ENCODE measurements at regions of chr1 and their contacts with region 1.

Region 1: GRCh38 chr1:45303582-45304310 is 22.9 kb upstream of the HPDL start:
- DNase-seq: peak; percentile 94 to 97 (median 95)
- H3K4me3 ChIP-seq: peak overlapping the region; percentile 42 to 86
- H3K4me3 Mint-ChIP-seq: peak overlapping the region; percentile 87 to 94 (median 92)
- H3K27ac ChIP-seq: peak overlapping the region; percentile 85
- H3K27ac Mint-ChIP-seq: peak overlapping the region; percentile 93 to 98 (median 96)
- H3K4me1 ChIP-seq: peaks cover 11% of the 10 kb centered on the region
- H3K4me1 Mint-ChIP-seq: peaks cover 11 to 24% (median 18%) of the 10 kb centered on the region in 4 donors
- H3K27me3 ChIP-seq: no peaks in the 10 kb centered on the region
- H3K27me3 Mint-ChIP-seq: no peaks in the 10 kb centered on the region

Region 2: DNA sequence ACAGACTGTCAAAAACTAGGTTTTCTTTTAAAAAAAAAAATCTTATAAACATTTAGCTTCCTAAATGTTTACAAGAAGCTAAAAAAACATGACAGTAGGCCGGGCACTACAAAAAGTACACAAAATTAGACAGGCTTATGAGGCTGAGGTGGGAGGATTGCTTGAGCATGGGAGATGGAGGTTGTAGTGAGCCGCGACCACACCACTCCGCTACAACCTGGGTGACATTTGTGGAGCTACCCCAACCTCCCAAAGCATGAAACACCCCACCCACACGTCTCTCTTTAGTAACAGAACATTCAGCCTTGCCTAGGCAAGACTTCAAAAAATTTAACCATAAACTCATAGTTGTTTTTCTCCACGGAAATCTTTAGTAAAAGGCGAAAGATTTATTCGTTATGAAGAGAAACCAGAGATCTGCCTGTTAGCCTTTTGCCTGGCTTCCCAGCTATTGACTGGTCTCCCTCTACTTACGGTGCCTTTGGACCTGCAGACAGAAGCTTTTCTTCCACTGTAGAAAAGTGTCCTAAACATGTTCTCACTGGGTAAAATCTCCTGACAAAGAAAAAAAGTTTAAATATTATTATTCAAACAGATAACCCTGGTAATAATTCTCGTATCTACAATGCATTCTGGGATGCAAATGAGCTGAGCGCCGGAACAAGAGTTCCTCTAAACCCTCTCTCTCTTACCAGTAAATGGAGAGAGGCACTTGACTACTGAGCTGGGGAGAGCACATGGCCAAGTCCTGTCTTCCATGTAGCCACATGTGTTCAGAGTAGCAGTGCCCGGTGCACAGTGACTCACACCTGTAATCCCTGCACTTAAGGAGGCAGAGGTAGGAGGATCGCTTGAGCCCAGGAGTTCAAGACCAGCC is 582.0 kb before region 1 on chr1:
- CTCF ChIA-PET with region 1: interaction called, 5 read pairs
- POLR2A ChIA-PET with region 1: interaction called, 19 read pairs
- intact Hi-C with region 1: loop called (anchors 5 kb)
- DNase-seq: peak; percentile 77 to 85 (median 79)
- H3K4me3 ChIP-seq: no peak overlapping the region
- H3K4me3 Mint-ChIP-seq: peak overlapping the region; percentile 57 to 87 (median 80)
- H3K27ac ChIP-seq: peak overlapping the region; percentile 51
- H3K27ac Mint-ChIP-seq: peak overlapping the region; percentile 89 to 97 (median 94)
- H3K4me1 ChIP-seq: peaks cover 58% of the 10 kb centered on the region
- H3K4me1 Mint-ChIP-seq: peaks cover 50 to 74% (median 62%) of the 10 kb centered on the region in 4 donors
- H3K27me3 ChIP-seq: no peaks in the 10 kb centered on the region
- H3K27me3 Mint-ChIP-seq: no peaks in the 10 kb centered on the region

Region 3: DNA sequence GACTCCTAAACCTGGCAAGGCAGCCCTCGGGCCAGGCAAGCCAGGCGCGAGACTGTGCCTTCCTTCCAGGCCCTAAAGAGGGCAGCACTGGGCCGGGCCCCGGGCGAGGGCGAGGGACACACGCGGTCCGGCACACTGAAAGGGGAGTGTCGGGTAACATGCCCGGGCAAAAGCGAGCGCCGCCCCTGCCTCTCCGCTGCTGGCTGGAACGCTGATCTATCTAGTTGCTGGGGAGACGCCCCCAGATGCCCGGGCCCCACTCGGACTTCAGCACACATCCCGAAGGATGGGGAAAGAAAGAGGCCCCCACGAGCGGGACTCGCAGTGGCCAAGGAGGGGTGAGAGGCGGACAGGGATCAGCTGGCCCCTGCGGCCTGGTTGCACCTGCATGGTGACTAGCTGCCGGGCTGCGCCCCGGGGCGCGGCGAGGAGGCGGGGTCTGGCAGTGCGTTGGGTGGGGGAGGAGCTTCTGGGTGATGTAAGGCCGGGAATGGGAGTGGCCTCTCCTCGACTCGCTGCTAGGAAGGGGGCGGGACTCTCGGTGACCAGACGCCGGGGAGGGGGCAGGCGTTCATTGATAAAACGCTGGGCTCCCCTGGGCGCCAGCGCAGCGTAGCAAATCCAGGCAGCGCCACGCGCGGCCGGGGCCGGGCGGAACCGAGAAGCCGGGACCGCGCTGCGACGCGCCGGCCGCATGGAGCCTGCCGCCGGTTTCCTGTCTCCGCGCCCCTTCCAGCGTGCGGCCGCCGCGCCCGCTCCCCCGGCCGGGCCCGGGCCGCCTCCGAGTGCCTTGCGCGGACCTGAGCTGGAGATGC is 503.8 kb before region 1 on chr1 and contains the start of gene PLK3:
- CTCF ChIA-PET with region 1: interaction called, 5 read pairs
- POLR2A ChIA-PET with region 1: interaction called, 23 read pairs
- intact Hi-C with region 1: no loop called
- DNase-seq: peak; percentile 99 to 100 (median 99)
- H3K4me3 ChIP-seq: peak within 1 kb of the TSS; percentile 77 to 83
- H3K4me3 Mint-ChIP-seq: peak within 1 kb of the TSS; percentile 89 to 99 (median 96)
- H3K27ac ChIP-seq: peak within 1 kb of the TSS; percentile 96
- H3K27ac Mint-ChIP-seq: peak within 1 kb of the TSS; percentile 82 to 100 (median 99)
- H3K4me1 ChIP-seq: peaks cover 37% of the 10 kb centered on the region
- H3K4me1 Mint-ChIP-seq: peaks cover 23 to 48% (median 31%) of the 10 kb centered on the region in 4 donors
- H3K27me3 ChIP-seq: no peaks in the 10 kb centered on the region
- H3K27me3 Mint-ChIP-seq: no peaks in the 10 kb centered on the region
- total RNA-seq, gene PLK3: 151 to 153 TPM

Region 4: GRCh38 chr1:44985747-44986359 is 317.9 kb before region 1 on chr1:
- CTCF ChIA-PET with region 1: interaction called, 5 read pairs
- POLR2A ChIA-PET with region 1: interaction called, 10 read pairs
- intact Hi-C with region 1: loop called (anchors 1 kb)
- DNase-seq: no peak
- H3K4me3 ChIP-seq: peak overlapping the region; percentile 67 to 70
- H3K4me3 Mint-ChIP-seq: peak overlapping the region; percentile 98 to 100 (median 99)
- H3K27ac ChIP-seq: peak overlapping the region; percentile 59
- H3K27ac Mint-ChIP-seq: peak overlapping the region; percentile 34 to 99 (median 96)
- H3K4me1 ChIP-seq: peaks cover 11% of the 10 kb centered on the region
- H3K4me1 Mint-ChIP-seq: peaks cover 15 to 26% (median 21%) of the 10 kb centered on the region in 4 donors
- H3K27me3 ChIP-seq: no peaks in the 10 kb centered on the region
- H3K27me3 Mint-ChIP-seq: no peaks in the 10 kb centered on the region

Region 5: GRCh38 chr1:45339789-45340570 is 36.2 kb after region 1 on chr1 and contains the starts of genes MUTYH and TOE1:
- CTCF ChIA-PET with region 1: interaction called, 36 read pairs
- POLR2A ChIA-PET with region 1: interaction called, 130 read pairs
- intact Hi-C with region 1: loop called (anchors 1 kb)
- DNase-seq: peak; percentile 89 to 92 (median 90)
- H3K4me3 ChIP-seq: peak within 1 kb of the TSS; percentile 84 to 91
- H3K4me3 Mint-ChIP-seq: peak within 1 kb of the TSS; percentile 98 to 100 (median 100)
- H3K27ac ChIP-seq: peak within 1 kb of the TSS; percentile 93
- H3K27ac Mint-ChIP-seq: peak within 1 kb of the TSS; percentile 96 to 100 (median 99)
- H3K4me1 ChIP-seq: peaks cover 46% of the 10 kb centered on the region
- H3K4me1 Mint-ChIP-seq: peaks cover 31 to 75% (median 51%) of the 10 kb centered on the region in 4 donors
- H3K27me3 ChIP-seq: no peaks in the 10 kb centered on the region
- H3K27me3 Mint-ChIP-seq: no peaks in the 10 kb centered on the region
- total RNA-seq, gene MUTYH: 70.0 to 72.1 TPM
- total RNA-seq, gene TOE1: 18.2 to 18.9 TPM

Region 6: GRCh38 chr1:45370575-45370974 is 66.8 kb after region 1 on chr1:
- CTCF ChIA-PET with region 1: no interaction called
- POLR2A ChIA-PET with region 1: no interaction called
- intact Hi-C with region 1: no loop called
- DNase-seq: no peak
- H3K4me3 ChIP-seq: no peak overlapping the region
- H3K4me3 Mint-ChIP-seq: no peak overlapping the region
- H3K27ac ChIP-seq: no peak overlapping the region
- H3K27ac Mint-ChIP-seq: peak overlapping the region in 1 of 7 donors; percentile 26
- H3K4me1 ChIP-seq: no peaks in the 10 kb centered on the region
- H3K4me1 Mint-ChIP-seq: peaks cover 0 to 5% (median 2%) of the 10 kb centered on the region in 4 donors
- H3K27me3 ChIP-seq: no peaks in the 10 kb centered on the region
- H3K27me3 Mint-ChIP-seq: no peaks in the 10 kb centered on the region

Region 7: GRCh38 chr1:45583264-45583665 is 279.5 kb after region 1 on chr1:
- CTCF ChIA-PET with region 1: no interaction called
- POLR2A ChIA-PET with region 1: interaction called, 11 read pairs
- intact Hi-C with region 1: loop called (anchors 5 kb)
- DNase-seq: peak; percentile 95 to 97 (median 96)
- H3K4me3 ChIP-seq: peak overlapping the region; percentile 99
- H3K4me3 Mint-ChIP-seq: peak overlapping the region; percentile 93 to 100 (median 100)
- H3K27ac ChIP-seq: peak overlapping the region; percentile 88
- H3K27ac Mint-ChIP-seq: peak overlapping the region; percentile 94 to 100 (median 99)
- H3K4me1 ChIP-seq: peaks cover 26% of the 10 kb centered on the region
- H3K4me1 Mint-ChIP-seq: peaks cover 20 to 42% (median 28%) of the 10 kb centered on the region in 4 donors
- H3K27me3 ChIP-seq: no peaks in the 10 kb centered on the region
- H3K27me3 Mint-ChIP-seq: no peaks in the 10 kb centered on the region

Measured in CD4-positive, alpha-beta memory T cell (primary cell).